H1 (cell line): ENCODE measurements at regions of chr11 and their contacts with region 1.

Region 1: DNA sequence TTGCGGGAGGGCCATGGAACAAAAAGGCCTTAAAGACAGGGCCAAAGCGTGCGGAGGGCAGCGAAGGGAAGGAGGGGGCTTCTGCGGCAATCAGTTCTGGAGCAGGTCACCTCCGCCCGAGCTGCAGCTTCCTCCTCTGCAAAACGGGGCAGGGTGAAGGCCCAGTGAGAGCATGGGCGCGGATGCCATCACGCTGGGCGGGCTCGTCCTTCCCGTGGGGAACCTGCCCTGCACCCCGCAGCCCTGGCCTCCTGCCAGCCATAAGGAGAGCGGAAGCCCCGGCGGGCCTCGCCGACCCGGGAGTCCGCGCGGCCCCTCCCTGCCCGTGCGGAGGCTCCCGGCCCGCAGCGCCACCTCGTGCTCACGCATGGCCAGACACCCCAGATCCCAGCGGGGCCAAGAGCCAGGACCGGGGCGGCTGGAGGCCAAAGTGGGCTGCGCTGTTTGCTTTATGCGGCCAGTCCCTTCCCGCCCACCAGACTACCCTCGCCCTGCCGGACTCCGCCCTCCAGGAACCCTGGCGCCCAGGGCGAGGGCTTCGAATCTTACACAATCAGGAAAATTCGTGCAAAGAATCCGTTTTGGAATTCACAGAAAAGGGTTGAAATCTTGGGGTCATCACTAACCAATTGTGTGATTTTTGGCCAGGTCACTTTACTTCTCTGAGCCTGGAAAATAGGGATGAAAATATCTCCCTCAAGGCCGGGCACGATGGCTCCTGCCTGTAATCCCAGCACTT is 16.1 kb downstream of the TSKU start:
- DNase-seq: peak in 1 of 2 experiments; percentile 96
- H3K4me3 ChIP-seq: peak overlapping the region in 3 of 4 experiments; percentile 36 to 49 (median 48); a peak in 4 of 8 replicates
- H3K27ac ChIP-seq: no peak overlapping the region
- H3K4me1 ChIP-seq: peaks cover 3 to 16% (median 7%) of the 10 kb centered on the region in 4 experiments; a peak in 6 of 7 replicates
- H3K27me3 ChIP-seq: no peaks in the 10 kb centered on the region; a peak in 1 of 7 replicates
- CTCF ChIP-seq: peak; percentile 79 to 93 (median 82)
- EP300 ChIP-seq: no peak
- POLR2A ChIP-seq: no peak
- RAD21 ChIP-seq: peak; percentile 76 to 89

Region 2: GRCh38 chr11:76728778-76729177 is 70.5 kb before region 1 on chr11:
- CTCF ChIA-PET with region 1: interaction called, 88 read pairs
- POLR2A ChIA-PET with region 1: no interaction called
- DNase-seq: no peak
- H3K4me3 ChIP-seq: no peak overlapping the region
- H3K27ac ChIP-seq: no peak overlapping the region
- H3K4me1 ChIP-seq: no peaks in the 10 kb centered on the region
- H3K27me3 ChIP-seq: no peaks in the 10 kb centered on the region; a peak in 1 of 7 replicates
- CTCF ChIP-seq: no peak
- EP300 ChIP-seq: no peak
- POLR2A ChIP-seq: no peak
- RAD21 ChIP-seq: no peak

Region 3: DNA sequence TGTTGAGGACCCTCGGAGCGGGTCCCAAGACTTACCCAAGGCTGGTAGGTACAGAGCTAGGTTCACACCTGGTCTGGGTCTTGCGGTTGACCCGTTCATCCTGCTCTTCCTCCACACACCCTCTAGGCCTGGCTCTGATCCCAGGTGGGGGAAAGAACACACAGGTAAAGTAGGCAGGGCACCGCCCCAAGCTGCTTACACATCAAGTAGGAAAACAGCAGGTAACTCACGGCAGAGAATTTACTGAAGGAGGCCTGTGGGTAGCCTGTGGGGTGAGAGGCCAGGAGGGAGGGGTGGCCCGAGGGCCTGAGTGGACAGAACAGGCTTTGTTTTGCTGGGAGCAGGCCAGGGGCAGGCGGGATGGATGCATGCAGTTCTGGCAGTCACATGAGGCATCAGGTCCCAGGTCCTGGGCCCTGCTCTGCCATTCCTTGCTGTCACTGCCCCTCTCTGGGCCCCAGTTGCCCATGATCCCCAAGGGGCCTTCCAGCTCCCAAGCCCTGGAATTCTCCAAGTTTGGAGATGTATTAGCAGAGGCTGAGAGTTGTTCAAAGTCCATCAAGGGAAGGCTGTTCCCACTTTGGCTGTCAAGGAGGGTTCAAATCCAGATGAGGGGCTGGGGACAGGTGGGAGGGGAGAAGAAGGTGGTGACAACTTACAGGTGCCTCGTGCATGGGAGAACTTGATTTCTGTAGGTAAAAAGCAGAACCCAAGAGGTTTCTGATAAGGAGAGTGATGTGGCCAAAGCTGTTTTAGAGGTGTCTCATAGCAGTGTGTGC is 10.4 kb before region 1 on chr11:
- CTCF ChIA-PET with region 1: interaction called, 33 read pairs
- POLR2A ChIA-PET with region 1: interaction called, 12 read pairs
- DNase-seq: no peak
- H3K4me3 ChIP-seq: no peak overlapping the region
- H3K27ac ChIP-seq: no peak overlapping the region
- H3K4me1 ChIP-seq: peaks cover 20 to 32% (median 30%) of the 10 kb centered on the region in 4 experiments
- H3K27me3 ChIP-seq: no peaks in the 10 kb centered on the region
- CTCF ChIP-seq: no peak
- EP300 ChIP-seq: no peak
- POLR2A ChIP-seq: no peak
- RAD21 ChIP-seq: no peak

Region 4: DNA sequence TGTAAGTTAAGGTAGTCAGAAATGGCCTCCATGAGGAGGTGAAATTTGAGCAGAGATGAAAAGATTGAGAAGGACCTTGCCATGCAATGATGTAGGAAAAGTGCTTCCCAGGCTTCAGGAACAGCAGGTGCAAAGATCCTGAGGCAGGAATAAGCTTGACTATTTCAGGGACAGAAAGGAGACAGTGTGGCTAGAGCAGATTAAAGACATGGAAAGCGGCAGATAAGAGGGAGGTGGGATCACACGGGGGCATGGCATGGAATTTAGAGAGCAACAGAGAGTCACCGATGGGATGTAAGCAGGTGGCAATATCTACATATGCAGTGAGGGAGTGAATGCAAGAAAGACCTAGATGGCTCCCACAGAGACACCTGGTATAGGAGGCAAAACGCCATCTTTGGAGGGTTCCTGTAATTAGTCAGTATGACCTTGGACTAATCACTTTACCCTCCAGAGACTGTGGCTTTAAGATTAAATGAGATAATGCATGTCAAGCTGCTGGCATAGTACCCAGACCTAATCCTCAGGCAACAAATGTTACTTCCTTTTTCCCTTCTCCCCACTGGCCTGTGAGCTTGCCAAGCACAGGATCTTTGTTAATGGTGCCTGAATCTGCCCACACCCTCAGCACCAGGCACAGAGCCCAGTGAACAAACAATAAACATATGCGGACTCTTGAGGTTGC is 36.8 kb after region 1 on chr11:
- CTCF ChIA-PET with region 1: interaction called, 12 read pairs
- POLR2A ChIA-PET with region 1: no interaction called
- DNase-seq: no peak
- H3K4me3 ChIP-seq: no peak overlapping the region
- H3K27ac ChIP-seq: no peak overlapping the region
- H3K4me1 ChIP-seq: 0 out of 7 replicates have a peak, but pooled peaks cover 0 to 4% (median 0%) of the 10 kb centered on the region in 4 experiments
- H3K27me3 ChIP-seq: no peaks in the 10 kb centered on the region
- CTCF ChIP-seq: no peak
- EP300 ChIP-seq: no peak
- POLR2A ChIP-seq: no peak
- RAD21 ChIP-seq: no peak

Region 5: DNA sequence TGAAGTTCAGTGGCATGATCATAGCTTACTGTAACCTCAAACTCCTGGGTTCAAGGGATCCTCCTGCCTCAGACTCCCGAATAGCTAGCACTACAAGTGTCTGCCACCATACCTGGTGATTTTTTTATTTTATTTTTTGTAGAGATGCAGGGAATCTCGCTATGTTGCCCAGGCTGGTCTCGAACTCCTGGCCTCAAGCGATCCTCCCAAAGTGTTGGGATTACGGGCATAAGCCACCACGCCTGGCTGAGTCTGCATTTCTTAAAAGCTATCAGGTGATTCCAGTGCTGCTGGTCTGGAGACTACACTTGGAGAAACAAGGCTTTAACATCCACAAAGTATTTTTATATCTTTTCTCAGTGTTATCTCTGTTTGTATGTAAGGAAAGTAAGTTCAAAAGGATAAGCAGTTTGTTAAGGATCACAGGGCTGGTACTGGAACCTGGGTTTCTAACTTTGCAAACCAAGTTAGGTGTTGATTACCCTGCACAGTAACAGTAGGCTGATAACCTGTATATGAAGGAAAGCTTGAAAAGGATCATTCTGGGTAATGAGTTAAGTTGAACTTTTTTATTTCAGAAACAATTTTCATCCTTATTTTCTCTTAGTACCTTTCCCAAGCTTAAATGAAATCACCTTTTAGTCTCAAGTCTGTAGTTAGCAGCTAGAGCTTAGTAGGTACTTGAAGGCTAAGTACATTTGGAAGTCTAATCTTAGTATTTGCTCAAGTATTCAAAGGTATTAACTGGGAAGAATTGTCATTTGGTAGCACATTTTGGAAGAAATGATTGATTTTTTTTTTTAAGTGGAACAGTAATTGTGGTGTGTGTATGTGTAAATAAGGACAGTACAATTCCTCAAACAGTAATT is 74.0 kb after region 1 on chr11:
- CTCF ChIA-PET with region 1: no interaction called
- POLR2A ChIA-PET with region 1: no interaction called
- DNase-seq: no peak
- H3K4me3 ChIP-seq: no peak overlapping the region
- H3K27ac ChIP-seq: no peak overlapping the region
- H3K4me1 ChIP-seq: no peaks in the 10 kb centered on the region
- H3K27me3 ChIP-seq: no peaks in the 10 kb centered on the region
- CTCF ChIP-seq: no peak
- EP300 ChIP-seq: no peak
- POLR2A ChIP-seq: no peak
- RAD21 ChIP-seq: no peak